ENCODE measurements at regions of chr18 and their contacts with region 1.

Region 1: DNA sequence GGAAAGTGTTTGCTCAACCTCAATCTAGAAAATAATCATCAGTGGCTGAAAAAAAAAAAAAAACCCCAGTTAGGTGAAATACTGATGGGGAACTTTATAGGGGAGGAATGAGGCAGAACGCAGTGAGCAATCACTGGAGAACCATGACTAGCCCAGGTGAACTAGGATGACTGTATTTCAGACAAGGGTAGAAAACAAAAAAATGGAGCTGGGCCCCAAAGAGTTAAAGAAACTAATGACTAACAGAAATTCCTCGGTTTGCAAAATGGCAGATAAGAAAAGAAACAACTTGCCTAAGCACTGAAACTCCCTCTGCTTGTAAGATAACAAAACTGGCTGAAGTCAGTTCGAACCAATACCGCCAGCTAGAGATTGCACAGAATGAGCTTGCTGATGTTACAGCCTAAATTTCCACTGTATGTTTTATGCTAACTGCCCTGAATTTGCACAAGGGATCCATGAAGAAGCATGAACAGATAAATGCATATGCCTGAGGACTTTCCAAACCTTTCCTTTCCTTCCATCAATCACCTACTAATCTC is 245.9 kb downstream of the METTL4 start:
- DNase-seq: peak; percentile 88
- H3K4me3 ChIP-seq: no peak overlapping the region
- H3K27ac ChIP-seq: peak overlapping the region; percentile 21
- H3K4me1 ChIP-seq: peaks cover 9% of the 10 kb centered on the region
- H3K27me3 ChIP-seq: no peaks in the 10 kb centered on the region
- CTCF ChIP-seq: no peak

Region 2: DNA sequence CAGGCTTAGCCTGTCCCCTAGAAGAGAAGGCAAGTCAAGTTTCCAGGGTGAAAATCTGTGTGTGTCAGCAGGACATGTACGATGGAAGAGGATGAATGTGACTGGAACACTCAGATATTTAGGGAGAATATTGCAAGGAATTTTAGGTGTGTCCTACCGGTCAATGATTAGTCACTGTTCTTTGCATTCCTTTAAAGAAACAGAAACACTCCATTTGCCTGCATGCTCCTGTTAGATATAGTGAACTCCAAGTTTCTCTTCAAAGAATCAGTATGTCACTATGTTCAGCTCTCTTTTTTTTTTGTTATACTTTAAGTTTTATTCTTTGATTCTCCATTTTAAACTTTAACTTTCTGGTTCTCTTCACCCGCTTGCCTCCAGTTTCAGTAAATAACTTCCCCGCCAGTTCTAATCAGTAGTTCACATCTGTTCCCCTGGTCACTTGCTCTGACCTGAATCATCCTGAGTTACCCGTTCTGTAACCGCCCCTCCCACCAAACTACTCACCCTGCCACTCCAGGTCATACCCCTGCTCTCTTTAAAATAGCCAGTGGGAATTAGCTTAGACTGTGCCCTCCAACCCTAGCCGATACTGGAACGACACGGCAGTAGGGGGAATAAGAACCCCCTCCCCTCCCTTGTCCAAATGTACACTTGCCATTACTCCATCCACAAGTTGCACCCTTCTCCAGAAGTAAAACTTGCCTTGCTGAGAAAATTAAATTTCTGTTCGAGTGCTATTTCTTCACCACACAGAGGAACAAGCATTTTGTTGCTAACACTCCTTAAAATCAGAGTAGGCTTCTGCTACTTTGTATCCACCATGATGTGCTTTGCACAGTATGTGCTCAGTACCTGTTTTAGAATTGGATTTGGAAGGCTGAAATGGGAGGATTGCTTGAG is 22.5 kb before region 1 on chr18:
- CTCF ChIA-PET with region 1: no interaction called
- dilution Hi-C with region 1: no loop called
- in situ Hi-C with region 1: no loop called
- intact Hi-C with region 1: loop called (anchors 2 kb)
- DNase-seq: peak; percentile 76
- H3K4me3 ChIP-seq: peak overlapping the region in 1 of 3 experiments; percentile 12
- H3K27ac ChIP-seq: peak overlapping the region; percentile 89
- H3K4me1 ChIP-seq: peaks cover 31% of the 10 kb centered on the region
- H3K27me3 ChIP-seq: no peaks in the 10 kb centered on the region
- CTCF ChIP-seq: no peak

Region 3: DNA sequence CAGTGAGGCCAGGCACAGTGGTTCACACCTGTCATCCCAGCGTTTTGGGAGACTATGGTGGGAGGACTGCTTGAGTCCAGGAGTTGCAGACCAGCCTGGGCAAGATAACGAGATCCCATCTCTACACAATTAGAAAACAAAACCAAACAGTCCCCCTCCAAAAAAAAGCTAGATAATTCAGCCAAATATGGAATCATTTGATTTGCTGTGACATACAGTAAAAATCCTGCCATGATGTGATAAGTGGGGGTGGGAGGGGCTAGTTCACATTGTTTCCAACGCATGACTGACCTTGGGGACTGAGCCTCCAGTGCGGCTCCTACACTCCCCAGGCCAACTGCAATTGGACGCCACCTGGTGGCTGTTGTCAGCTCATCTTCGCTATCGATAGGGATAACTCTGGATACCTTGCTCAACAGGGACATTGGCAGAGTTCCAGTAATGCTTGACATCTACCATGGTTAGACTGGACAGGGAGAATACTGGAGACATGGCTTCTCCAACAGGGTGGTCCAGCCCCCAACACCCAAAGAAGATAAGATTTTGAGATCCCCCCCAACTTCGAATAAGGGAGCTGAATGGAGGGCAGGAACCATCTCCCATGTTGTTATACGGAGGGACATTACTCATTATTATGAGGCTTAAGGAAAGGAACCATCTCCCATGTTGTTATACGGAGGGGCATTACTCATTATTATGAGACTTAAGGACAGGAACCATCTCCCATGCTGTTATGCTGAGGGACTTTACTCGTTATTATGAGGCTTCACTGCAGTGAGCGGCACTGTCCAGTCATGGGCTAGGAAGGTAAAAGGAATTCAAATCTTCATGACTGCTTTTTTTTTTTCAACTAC is 1260.5 kb after region 1 on chr18:
- CTCF ChIA-PET with region 1: no interaction called
- dilution Hi-C with region 1: no loop called
- in situ Hi-C with region 1: no loop called
- intact Hi-C with region 1: no loop called
- DNase-seq: peak; percentile 61
- H3K4me3 ChIP-seq: no peak overlapping the region
- H3K27ac ChIP-seq: no peak overlapping the region
- H3K4me1 ChIP-seq: peaks cover 9% of the 10 kb centered on the region
- H3K27me3 ChIP-seq: no peaks in the 10 kb centered on the region
- CTCF ChIP-seq: peak; percentile 86 to 90

Measured in mammary epithelial cell (primary cell).